ENCODE measurements at regions of chr3 and their contacts with region 1.

Region 1: GRCh38 chr3:114152519-114153151 is 26.2 kb downstream of the DRD3 start:
- DNase-seq: peak; percentile 81
- ATAC-seq: peak; percentile 88
- H3K4me3 ChIP-seq: peak overlapping the region; percentile 65
- H3K27ac ChIP-seq: no peak overlapping the region
- H3K4me1 ChIP-seq: peaks cover 6% of the 10 kb centered on the region; the same call in 1 of the 2 replicates
- H3K27me3 ChIP-seq: peaks cover 13% of the 10 kb centered on the region
- CTCF ChIP-seq: peak; percentile 94

Region 2: DNA sequence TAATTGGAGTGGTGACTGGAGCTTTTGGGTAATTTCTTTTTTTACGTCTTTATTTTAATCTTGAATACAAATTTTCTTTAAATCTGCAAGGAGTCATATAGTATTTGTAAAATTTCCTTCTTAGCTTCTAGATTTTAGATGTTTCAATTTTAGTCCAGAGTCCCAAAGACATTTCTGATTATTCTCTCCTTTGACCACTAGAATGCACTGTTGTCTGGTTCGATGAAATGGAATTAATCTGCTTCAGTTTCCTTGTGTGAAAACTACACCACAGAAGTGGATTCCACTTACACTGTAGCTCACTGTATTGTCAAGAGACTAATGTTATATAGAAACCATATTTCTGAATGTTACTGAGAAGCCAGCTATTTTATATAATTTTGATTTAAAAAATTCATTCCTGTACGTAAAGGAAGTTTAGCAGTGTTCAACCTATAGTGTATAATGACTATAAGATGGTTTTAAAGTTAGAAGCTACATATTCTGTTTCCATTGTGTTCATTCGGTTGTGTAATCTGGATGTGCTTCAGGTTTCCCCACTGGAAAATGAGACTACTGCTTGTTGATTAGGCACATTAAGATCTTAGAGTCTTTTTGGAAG is 307.9 kb before region 1 on chr3:
- CTCF ChIA-PET with region 1: no interaction called
- POLR2A ChIA-PET with region 1: no interaction called
- intact Hi-C with region 1: loop called (anchors 10 kb)
- DNase-seq: peak; percentile 78
- ATAC-seq: peak; percentile 73
- H3K4me3 ChIP-seq: no peak overlapping the region
- H3K27ac ChIP-seq: no peak overlapping the region
- H3K4me1 ChIP-seq: peaks cover 20% of the 10 kb centered on the region
- H3K27me3 ChIP-seq: no peaks in the 10 kb centered on the region
- CTCF ChIP-seq: peak; percentile 81

Region 3: DNA sequence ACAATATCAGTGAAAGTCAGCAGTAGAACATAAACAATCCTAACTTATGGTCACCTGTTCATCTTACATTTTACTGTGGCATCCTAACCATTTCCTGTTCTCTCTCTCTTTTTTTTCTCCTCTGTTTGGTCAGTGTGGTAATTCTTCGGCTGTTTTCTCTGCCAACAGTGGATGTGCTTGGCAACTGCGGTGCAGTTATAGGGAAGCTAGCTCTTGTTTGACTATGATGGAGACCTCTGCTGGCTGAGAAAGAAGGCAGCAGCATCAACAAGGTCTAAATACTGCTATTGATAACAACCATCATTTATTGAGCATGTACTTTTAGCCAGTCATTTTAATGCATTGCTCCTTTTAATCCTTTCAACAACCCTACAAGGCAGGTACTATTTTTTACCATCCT is 26.9 kb after region 1 on chr3:
- CTCF ChIA-PET with region 1: interaction called, 4 read pairs
- POLR2A ChIA-PET with region 1: no interaction called
- intact Hi-C with region 1: loop called (anchors 1 kb)
- DNase-seq: peak; percentile 43
- ATAC-seq: peak; percentile 77
- H3K4me3 ChIP-seq: no peak overlapping the region
- H3K27ac ChIP-seq: no peak overlapping the region
- H3K4me1 ChIP-seq: no peaks in the 10 kb centered on the region
- H3K27me3 ChIP-seq: peaks cover 20% of the 10 kb centered on the region; the same call in 1 of the 2 replicates
- CTCF ChIP-seq: peak; percentile 55

Region 4: DNA sequence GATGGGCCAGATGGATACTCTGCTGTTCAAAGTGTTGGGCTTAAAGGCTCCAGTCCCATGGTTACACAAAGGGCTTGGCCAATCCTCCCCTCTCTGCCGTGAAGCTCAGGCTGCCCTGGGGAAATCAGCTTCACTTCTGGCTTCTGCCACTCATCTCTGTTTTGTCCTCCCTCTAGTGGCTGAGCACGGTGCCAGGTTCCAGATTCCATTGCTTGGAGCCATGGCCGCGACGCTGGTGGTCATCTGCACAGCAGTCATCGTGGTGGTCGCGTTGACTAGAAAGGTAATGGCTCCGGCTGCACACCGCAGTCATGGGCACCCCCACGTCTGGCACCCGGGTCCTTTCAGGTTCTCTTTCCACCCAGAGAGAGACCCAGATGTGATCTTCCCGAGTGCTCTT is 146.8 kb after region 1 on chr3:
- CTCF ChIA-PET with region 1: interaction called, 3 read pairs
- POLR2A ChIA-PET with region 1: no interaction called
- intact Hi-C with region 1: loop called (anchors 1 kb)
- DNase-seq: peak; percentile 42
- ATAC-seq: peak; percentile 94
- H3K4me3 ChIP-seq: no peak overlapping the region
- H3K27ac ChIP-seq: no peak overlapping the region
- H3K4me1 ChIP-seq: no peaks in the 10 kb centered on the region
- H3K27me3 ChIP-seq: peaks cover 12% of the 10 kb centered on the region
- CTCF ChIP-seq: peak; percentile 63

Region 5: GRCh38 chr3:114336122-114336697 is 183.6 kb after region 1 on chr3:
- CTCF ChIA-PET with region 1: no interaction called
- POLR2A ChIA-PET with region 1: no interaction called
- intact Hi-C with region 1: loop called (anchors 2 kb)
- DNase-seq: no peak
- ATAC-seq: no peak
- H3K4me3 ChIP-seq: no peak overlapping the region
- H3K27ac ChIP-seq: no peak overlapping the region
- H3K4me1 ChIP-seq: no peaks in the 10 kb centered on the region
- H3K27me3 ChIP-seq: no peaks in the 10 kb centered on the region
- CTCF ChIP-seq: peak; percentile 69

Region 6: GRCh38 chr3:114418724-114419543 is 266.3 kb after region 1 on chr3:
- CTCF ChIA-PET with region 1: no interaction called
- POLR2A ChIA-PET with region 1: no interaction called
- intact Hi-C with region 1: loop called (anchors 1 kb)
- DNase-seq: peak; percentile 67
- ATAC-seq: peak; percentile 97
- H3K4me3 ChIP-seq: no peak overlapping the region
- H3K27ac ChIP-seq: no peak overlapping the region
- H3K4me1 ChIP-seq: no peaks in the 10 kb centered on the region
- H3K27me3 ChIP-seq: no peaks in the 10 kb centered on the region; the same call in 1 of the 2 replicates
- CTCF ChIP-seq: peak; percentile 90